BJ (cell line): ENCODE measurements at regions of chr4 and their contacts with region 1.

Region 1: GRCh38 chr4:153142700-153143438 is 61.4 kb upstream of the TRIM2 start:
- DNase-seq: no peak
- H3K4me3 ChIP-seq: no peak overlapping the region
- H3K27me3 ChIP-seq: peaks cover 2% of the 10 kb centered on the region
- CTCF ChIP-seq: peak; percentile 93

Region 2: GRCh38 chr4:153127760-153128494 is 14.9 kb before region 1 on chr4:
- CTCF ChIA-PET with region 1: interaction called, 11 read pairs
- POLR2A ChIA-PET with region 1: no interaction called
- DNase-seq: no peak
- H3K4me3 ChIP-seq: no peak overlapping the region; the same call in 1 of the 2 replicates
- H3K27me3 ChIP-seq: peaks cover 1% of the 10 kb centered on the region; the same call in 1 of the 2 replicates
- CTCF ChIP-seq: peak; percentile 79

Region 3: GRCh38 chr4:153169776-153170175 is 26.9 kb after region 1 on chr4:
- CTCF ChIA-PET with region 1: no interaction called
- POLR2A ChIA-PET with region 1: no interaction called
- DNase-seq: no peak
- H3K4me3 ChIP-seq: no peak overlapping the region
- H3K27me3 ChIP-seq: no peaks in the 10 kb centered on the region; the same call in 1 of the 2 replicates
- CTCF ChIP-seq: no peak

Region 4: GRCh38 chr4:153204247-153205027 is 61.6 kb after region 1 on chr4 and contains the start of gene TRIM2:
- CTCF ChIA-PET with region 1: interaction called, 12 read pairs
- POLR2A ChIA-PET with region 1: no interaction called
- DNase-seq: no peak
- H3K4me3 ChIP-seq: no peak within 1 kb of the TSS
- H3K27me3 ChIP-seq: no peaks in the 10 kb centered on the region
- CTCF ChIP-seq: no peak
- polyA plus RNA-seq, gene TRIM2: 24.5 and 34.1 TPM in 2 replicates

Region 5: DNA sequence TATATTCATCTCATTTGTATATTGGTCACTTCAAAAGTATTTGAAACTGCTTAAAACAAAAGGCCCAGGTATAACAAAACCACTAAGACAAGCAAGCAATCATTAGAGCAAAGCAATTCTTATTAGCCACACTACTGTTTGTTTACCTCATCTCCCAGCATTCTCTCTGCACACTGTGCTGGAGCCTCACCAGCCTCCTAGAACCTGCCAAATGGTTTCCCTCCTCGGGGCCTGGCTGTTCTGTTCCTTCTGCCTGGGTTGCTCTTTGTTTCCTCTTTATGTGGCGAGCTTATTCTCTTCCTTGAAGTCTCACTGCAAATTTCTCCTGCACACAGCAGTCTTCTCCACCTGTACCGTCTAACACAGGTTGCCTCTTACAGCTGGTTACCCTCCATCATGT is 134.1 kb after region 1 on chr4:
- CTCF ChIA-PET with region 1: no interaction called
- POLR2A ChIA-PET with region 1: interaction called, 10 read pairs
- DNase-seq: no peak
- H3K4me3 ChIP-seq: no peak overlapping the region
- H3K27me3 ChIP-seq: no peaks in the 10 kb centered on the region
- CTCF ChIP-seq: no peak

Region 6: GRCh38 chr4:153318696-153319320 is 175.9 kb after region 1 on chr4:
- CTCF ChIA-PET with region 1: interaction called, 34 read pairs
- POLR2A ChIA-PET with region 1: no interaction called
- DNase-seq: peak; percentile 4
- H3K4me3 ChIP-seq: no peak overlapping the region
- H3K27me3 ChIP-seq: no peaks in the 10 kb centered on the region
- CTCF ChIP-seq: peak; percentile 76

Region 7: DNA sequence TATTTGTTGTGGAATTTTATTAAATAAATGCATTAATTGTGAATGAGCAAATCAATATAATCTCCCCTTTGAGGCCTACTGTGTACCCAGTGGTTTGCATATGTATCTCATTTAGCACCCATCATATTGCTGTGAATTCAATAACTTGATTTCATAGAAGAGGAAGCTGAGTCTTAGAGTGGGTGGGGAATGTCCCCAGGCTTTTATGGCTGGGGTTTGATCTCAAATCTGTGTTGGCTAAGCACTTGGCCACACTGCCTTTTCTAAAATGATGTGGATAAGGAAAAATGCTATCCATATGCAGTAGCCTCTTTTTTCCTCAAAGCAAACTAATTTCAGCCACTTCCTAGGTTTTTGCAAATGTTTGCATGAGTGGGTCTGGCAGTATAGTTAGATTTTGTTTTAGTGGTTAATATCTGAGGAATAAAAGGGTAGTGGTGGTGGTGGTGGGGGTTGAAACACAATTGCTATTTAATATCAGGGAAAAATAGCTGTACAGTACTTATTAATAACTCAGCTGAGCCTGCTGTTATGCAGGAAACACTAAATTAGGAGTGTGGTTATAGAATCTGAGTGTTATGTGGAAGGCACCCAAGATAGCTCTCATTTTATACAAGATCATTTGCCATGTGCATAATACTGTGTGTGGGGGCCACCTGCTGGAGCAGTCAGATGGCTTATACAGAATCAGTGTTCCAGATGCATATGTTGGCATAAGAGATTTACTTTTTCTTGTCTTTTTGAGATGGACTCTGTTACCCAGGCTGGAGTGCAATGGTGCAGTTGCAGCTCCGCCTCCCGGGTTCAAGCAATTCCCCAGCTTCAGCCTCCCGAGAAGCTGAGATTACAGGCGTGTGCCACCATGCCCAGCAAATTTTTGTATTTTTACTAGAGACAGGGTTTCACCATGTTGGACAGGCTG is 431.3 kb after region 1 on chr4:
- CTCF ChIA-PET with region 1: interaction called, 13 read pairs
- POLR2A ChIA-PET with region 1: no interaction called
- DNase-seq: peak; percentile 30
- H3K4me3 ChIP-seq: no peak overlapping the region
- H3K27me3 ChIP-seq: no peaks in the 10 kb centered on the region
- CTCF ChIP-seq: peak; percentile 74